Transverse colon (tissue), 4 donors: ENCODE measurements at regions of chr20 and their contacts with region 1.

Region 1: DNA sequence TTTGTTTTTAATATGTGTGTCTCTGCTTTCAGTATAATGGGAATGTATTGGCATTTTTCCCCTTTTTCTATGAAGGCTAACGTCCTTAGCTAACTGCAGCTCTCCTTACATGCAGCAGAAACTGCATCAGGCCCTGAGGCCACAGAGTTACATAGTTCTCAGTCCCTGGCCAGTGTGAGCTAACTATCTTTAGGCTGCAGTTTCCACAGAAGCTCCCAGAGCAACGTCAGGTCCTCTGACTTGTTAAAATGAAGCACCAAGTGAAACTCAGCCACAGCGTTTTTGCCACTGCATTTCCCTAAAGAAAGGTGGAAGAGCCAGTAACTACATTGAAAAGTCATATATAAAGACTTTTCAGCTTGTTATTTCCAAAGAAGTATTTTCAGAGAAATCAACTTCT is 244.7 kb downstream of the CBLN4 start:
- DNase-seq: no peak
- H3K4me3 ChIP-seq: no peak overlapping the region
- H3K27ac ChIP-seq: no peak overlapping the region
- H3K4me1 ChIP-seq: no peaks in the 10 kb centered on the region
- H3K27me3 ChIP-seq: no peaks in the 10 kb centered on the region
- CTCF ChIP-seq: no peak
- EP300 ChIP-seq: no peak
- POLR2A ChIP-seq: no peak

Region 2: GRCh38 chr20:55667955-55668354 is 92.6 kb before region 1 on chr20:
- in situ Hi-C with region 1: loop called in 1 of 4 experiments (anchors 25 kb)
- intact Hi-C with region 1: no loop called
- DNase-seq: no peak
- H3K4me3 ChIP-seq: no peak overlapping the region
- H3K27ac ChIP-seq: no peak overlapping the region
- H3K4me1 ChIP-seq: peaks cover 0 to 15% (median 9%) of the 10 kb centered on the region in 4 donors
- H3K27me3 ChIP-seq: no peaks in the 10 kb centered on the region
- CTCF ChIP-seq: no peak
- EP300 ChIP-seq: no peak
- POLR2A ChIP-seq: no peak